ENCODE measurements at regions of chr3 and their contacts with region 1.

Region 1: GRCh38 chr3:141561426-141562034 is 74.7 kb downstream of the RASA2 start:
- DNase-seq: no peak
- H3K4me3 Mint-ChIP-seq: no peak overlapping the region
- H3K27ac Mint-ChIP-seq: peak overlapping the region; percentile 40
- H3K4me1 Mint-ChIP-seq: peaks cover 25% of the 10 kb centered on the region
- H3K27me3 Mint-ChIP-seq: no peaks in the 10 kb centered on the region

Region 2: GRCh38 chr3:141471160-141471559 is 90.4 kb before region 1 on chr3:
- CTCF ChIA-PET with region 1: interaction called, 38 read pairs
- POLR2A ChIA-PET with region 1: no interaction called
- intact Hi-C with region 1: loop called (anchors 1 kb)
- DNase-seq: no peak
- H3K4me3 Mint-ChIP-seq: no peak overlapping the region
- H3K27ac Mint-ChIP-seq: no peak overlapping the region
- H3K4me1 Mint-ChIP-seq: peaks cover 9% of the 10 kb centered on the region
- H3K27me3 Mint-ChIP-seq: no peaks in the 10 kb centered on the region

Region 3: DNA sequence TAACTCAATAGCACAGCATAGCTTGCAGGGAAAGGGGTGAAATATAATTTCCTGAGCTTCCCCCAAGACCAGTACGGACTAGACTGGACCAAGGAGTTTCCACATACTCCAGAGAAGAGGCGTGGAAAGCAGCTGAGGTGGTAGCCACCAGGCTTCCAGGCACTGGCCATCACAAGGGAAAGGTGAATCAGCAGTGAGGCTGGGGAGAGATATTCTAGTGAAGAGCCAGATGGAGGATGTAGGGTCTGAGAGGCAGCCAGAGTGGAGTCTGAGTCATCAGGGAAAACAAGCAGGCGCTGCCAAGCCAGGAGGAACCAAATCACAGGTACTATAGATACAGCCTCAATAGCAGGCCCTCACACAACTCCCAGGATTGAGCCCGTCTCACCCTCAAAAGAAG is 84.3 kb before region 1 on chr3:
- CTCF ChIA-PET with region 1: interaction called, 38 read pairs
- POLR2A ChIA-PET with region 1: no interaction called
- intact Hi-C with region 1: loop called (anchors 1 kb)
- DNase-seq: no peak
- H3K4me3 Mint-ChIP-seq: no peak overlapping the region
- H3K27ac Mint-ChIP-seq: no peak overlapping the region
- H3K4me1 Mint-ChIP-seq: peaks cover 22% of the 10 kb centered on the region
- H3K27me3 Mint-ChIP-seq: no peaks in the 10 kb centered on the region

Region 4: DNA sequence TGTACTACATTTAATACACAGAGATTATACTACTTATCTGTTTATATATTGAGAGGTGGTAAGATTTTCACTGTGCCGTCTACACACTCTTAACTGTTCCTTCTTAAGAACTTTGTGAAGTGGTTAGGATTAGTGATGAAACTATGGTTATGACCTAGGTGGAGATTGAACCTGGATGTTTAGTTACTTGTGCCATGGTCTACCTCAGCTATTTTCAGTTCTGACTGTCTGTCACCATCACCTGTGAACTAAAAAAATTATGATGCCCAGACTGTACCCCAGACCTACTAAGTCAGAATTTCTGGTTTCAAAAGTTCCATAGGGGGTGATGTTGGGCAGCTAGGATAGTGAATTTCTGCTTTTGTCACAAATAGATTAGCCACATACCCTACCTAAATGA is 68.3 kb before region 1 on chr3:
- CTCF ChIA-PET with region 1: interaction called, 23 read pairs
- POLR2A ChIA-PET with region 1: interaction called, 8 read pairs
- intact Hi-C with region 1: no loop called
- DNase-seq: no peak
- H3K4me3 Mint-ChIP-seq: no peak overlapping the region
- H3K27ac Mint-ChIP-seq: peak overlapping the region; percentile 30
- H3K4me1 Mint-ChIP-seq: peaks cover 86% of the 10 kb centered on the region
- H3K27me3 Mint-ChIP-seq: no peaks in the 10 kb centered on the region

Region 5: GRCh38 chr3:141514382-141514781 is 47.1 kb before region 1 on chr3:
- CTCF ChIA-PET with region 1: interaction called, 15 read pairs
- POLR2A ChIA-PET with region 1: interaction called, 7 read pairs
- intact Hi-C with region 1: no loop called
- DNase-seq: no peak
- H3K4me3 Mint-ChIP-seq: no peak overlapping the region
- H3K27ac Mint-ChIP-seq: peak overlapping the region; percentile 57
- H3K4me1 Mint-ChIP-seq: peaks cover 52% of the 10 kb centered on the region
- H3K27me3 Mint-ChIP-seq: no peaks in the 10 kb centered on the region

Measured in activated CD4-positive, alpha-beta memory T cell treated with anti-CD3 and anti-CD28 coated beads for 36 hours (primary cell).